ENCODE measurements at regions of chr11 and their contacts with region 1.

Region 1: GRCh38 chr11:81963018-81963417 is 770.6 kb downstream of the FAM181B start:
- DNase-seq: no peak
- H3K4me3 Mint-ChIP-seq: no peak overlapping the region
- H3K27ac Mint-ChIP-seq: no peak overlapping the region
- H3K4me1 Mint-ChIP-seq: peaks cover 26% of the 10 kb centered on the region
- H3K27me3 Mint-ChIP-seq: no peaks in the 10 kb centered on the region

Region 2: GRCh38 chr11:81596704-81597103 is 366.3 kb before region 1 on chr11:
- intact Hi-C with region 1: no loop called
- DNase-seq: no peak
- H3K4me3 Mint-ChIP-seq: no peak overlapping the region
- H3K27ac Mint-ChIP-seq: no peak overlapping the region
- H3K4me1 Mint-ChIP-seq: no peaks in the 10 kb centered on the region
- H3K27me3 Mint-ChIP-seq: no peaks in the 10 kb centered on the region

Region 3: GRCh38 chr11:81787584-81788049 is 175.4 kb before region 1 on chr11:
- intact Hi-C with region 1: loop called (anchors 5 kb)
- DNase-seq: no peak
- H3K4me3 Mint-ChIP-seq: no peak overlapping the region
- H3K27ac Mint-ChIP-seq: peak overlapping the region; percentile 70
- H3K4me1 Mint-ChIP-seq: peaks cover 16% of the 10 kb centered on the region
- H3K27me3 Mint-ChIP-seq: peaks cover 3% of the 10 kb centered on the region

Region 4: GRCh38 chr11:81979448-81979847 is 16.4 kb after region 1 on chr11:
- intact Hi-C with region 1: no loop called
- DNase-seq: no peak
- H3K4me3 Mint-ChIP-seq: no peak overlapping the region
- H3K27ac Mint-ChIP-seq: no peak overlapping the region
- H3K4me1 Mint-ChIP-seq: no peaks in the 10 kb centered on the region
- H3K27me3 Mint-ChIP-seq: no peaks in the 10 kb centered on the region

Region 5: GRCh38 chr11:82191695-82192094 is 228.7 kb after region 1 on chr11:
- intact Hi-C with region 1: no loop called
- DNase-seq: no peak
- H3K4me3 Mint-ChIP-seq: no peak overlapping the region
- H3K27ac Mint-ChIP-seq: no peak overlapping the region
- H3K4me1 Mint-ChIP-seq: no peaks in the 10 kb centered on the region
- H3K27me3 Mint-ChIP-seq: no peaks in the 10 kb centered on the region